OCI-LY7 (cell line): ENCODE measurements at regions of chr16 and their contacts with region 1.

Region 1: GRCh38 chr16:75234856-75235696 is 16.3 kb downstream of the CTRB1 start:
- DNase-seq: no peak
- H3K4me3 ChIP-seq: no peak overlapping the region
- H3K27ac ChIP-seq: no peak overlapping the region
- H3K4me1 ChIP-seq: no peaks in the 10 kb centered on the region
- CTCF ChIP-seq: no peak

Region 2: DNA sequence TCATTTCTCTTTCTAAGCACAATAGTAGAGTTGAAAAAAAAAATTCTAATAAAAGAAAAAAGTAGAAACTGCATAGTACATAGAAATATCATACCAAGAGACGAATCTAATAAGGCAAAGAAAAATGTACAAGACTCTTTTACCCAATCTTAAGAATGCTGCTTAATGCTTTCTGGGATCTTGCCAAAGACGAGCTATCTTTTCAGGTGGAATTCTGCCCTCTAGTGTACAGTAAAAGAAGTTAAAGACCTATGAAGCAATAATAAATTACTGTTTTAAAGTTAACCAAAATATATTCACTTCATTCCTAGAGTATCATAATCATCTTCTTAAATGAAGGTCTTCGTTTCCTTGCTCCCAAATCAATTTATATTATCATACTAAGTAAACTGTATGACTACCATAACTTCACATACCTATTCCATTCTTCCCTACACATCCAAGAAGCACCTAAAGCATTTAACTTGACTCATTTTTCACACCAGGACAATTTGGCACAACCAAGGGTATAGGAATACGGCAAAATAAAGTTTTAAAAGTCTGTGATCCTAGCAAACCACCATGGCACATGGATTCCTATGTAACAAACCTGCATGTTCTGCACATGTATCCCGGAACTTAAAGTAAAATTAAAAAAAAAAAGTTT is 150.6 kb after region 1 on chr16:
- CTCF ChIA-PET with region 1: interaction called, 5 read pairs
- POLR2A ChIA-PET with region 1: interaction called, 3 read pairs
- intact Hi-C with region 1: loop called (anchors 1 kb)
- DNase-seq: peak; percentile 76
- H3K4me3 ChIP-seq: no peak overlapping the region
- H3K27ac ChIP-seq: no peak overlapping the region
- H3K4me1 ChIP-seq: peaks cover 24% of the 10 kb centered on the region
- CTCF ChIP-seq: peak; percentile 94